ENCODE measurements at regions of chr22 and their contacts with region 1.

Region 1: DNA sequence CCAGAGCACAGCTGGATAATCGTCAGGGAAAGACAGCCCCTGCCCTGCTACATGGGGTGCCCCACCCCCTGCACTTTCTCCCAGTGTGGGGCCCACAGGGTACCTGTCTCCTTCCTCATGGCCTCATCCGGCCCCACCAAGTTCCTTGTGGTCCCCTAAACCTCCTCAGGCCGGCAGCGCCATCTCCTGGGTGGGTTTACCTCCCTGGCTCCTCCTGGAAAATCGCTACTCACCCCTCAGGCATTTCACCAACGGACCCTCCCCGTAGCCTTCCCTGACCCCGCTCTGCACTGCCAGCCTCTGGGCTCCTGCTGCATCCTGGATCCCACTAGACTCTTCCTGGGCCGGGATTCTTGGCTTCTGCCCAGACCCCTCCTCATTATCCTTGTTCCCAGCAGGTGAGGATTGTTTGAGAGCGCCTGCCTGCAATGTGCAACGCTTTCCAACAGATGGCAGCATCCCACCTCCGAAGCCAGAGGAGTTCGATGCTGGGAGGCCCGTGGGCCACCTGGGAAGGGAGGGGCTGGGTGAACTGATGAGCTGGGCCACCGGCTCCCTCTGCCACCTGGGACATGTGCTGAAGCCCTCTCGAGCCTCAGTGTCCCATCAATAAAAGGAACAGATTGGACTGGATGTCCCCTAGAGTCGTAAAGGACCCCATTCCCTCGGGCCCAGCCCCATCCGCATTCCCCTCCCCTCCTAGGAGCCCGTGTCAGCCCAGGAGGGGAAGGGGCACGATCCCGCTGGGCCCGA is 44.2 kb upstream of the TTLL12 start:
- DNase-seq: peak; percentile 89
- ATAC-seq: peak; percentile 54
- H3K4me3 Mint-ChIP-seq: peak overlapping the region; percentile 45
- H3K27ac Mint-ChIP-seq: peak overlapping the region; percentile 79
- H3K4me1 Mint-ChIP-seq: peaks cover 19% of the 10 kb centered on the region
- H3K27me3 Mint-ChIP-seq: no peaks in the 10 kb centered on the region; the same call in 1 of the 2 replicates
- CTCF ChIP-seq: peak; percentile 97

Region 2: DNA sequence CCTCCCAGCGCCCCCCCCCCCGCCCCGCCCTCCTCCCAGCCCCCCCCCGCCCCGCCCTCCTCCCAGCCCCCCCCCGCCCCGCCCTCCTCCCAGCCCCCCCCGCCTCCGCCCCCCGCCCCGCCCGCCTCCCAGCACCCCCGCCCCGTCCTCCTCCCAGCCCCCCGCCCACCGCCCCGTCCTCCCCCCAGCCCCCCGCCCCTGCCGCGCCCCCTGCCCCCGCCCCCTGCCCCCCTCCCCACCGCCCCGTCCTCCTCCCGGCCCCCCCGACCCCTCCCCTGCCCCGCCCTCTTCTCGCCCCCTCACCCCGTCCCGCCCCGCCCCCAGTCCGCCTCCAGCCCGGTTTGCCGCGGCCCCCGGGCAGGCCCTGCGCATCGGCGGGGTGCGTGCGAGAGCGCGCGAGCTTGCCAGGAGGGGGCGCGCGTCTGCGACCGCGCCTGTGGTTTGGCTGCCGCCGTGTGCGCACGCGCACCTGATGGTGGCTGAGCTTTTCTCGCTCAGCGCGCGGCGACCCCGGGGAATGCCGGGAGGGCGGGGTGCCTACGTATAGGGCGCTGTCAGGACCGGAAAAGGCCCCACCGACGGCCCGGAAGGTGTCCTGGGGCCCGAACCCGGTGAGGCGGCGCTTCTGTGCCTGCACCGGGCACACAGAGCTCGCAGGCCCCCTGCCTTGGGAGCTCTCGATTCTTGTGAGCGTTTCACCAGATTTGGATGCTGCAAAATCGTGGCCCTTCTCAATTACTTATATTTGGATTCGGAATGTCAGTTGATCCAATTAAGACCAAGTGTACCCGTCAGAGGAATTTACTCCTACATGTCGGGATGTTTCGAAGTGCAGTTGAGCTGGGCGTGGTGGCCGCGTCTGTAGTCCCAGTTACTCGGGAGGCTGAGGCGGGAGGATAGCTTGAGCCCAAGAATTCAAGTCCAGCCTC is 43.7 kb before region 1 on chr22:
- CTCF ChIA-PET with region 1: interaction called, 85 read pairs
- POLR2A ChIA-PET with region 1: no interaction called
- DNase-seq: peak; percentile 95
- ATAC-seq: peak; percentile 86
- H3K4me3 Mint-ChIP-seq: peak overlapping the region; percentile 65
- H3K27ac Mint-ChIP-seq: peak overlapping the region; percentile 74
- H3K4me1 Mint-ChIP-seq: peaks cover 24% of the 10 kb centered on the region
- H3K27me3 Mint-ChIP-seq: peaks cover 22% of the 10 kb centered on the region
- CTCF ChIP-seq: peak; percentile 69

Region 3: DNA sequence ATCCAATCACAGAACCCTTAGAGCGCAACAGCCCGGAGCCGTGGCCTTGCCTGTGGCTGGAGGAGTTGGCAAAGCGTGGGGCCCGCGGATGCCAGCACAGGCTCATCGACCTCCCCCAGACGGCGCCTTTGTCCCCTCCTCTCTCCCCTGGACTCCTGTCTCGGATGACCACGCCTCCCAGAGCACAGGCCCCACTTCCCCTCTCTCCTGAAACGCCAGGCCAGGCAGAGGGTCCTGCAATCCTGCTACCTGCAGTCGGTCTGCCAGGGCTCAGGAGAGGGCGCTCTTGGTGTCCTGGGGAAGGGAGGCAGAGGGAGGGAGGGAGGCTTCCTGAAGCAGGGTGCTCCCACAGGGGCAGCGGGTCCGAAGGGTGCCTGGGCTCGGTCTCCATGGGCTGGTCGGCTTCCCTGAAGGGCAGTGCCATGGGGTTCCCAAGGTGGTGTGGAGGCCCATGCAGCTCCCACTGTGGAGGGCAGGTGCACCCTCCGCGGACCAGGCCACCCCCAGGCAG is 27.6 kb before region 1 on chr22:
- CTCF ChIA-PET with region 1: interaction called, 35 read pairs
- POLR2A ChIA-PET with region 1: no interaction called
- DNase-seq: peak; percentile 81
- ATAC-seq: peak; percentile 94
- H3K4me3 Mint-ChIP-seq: no peak overlapping the region
- H3K27ac Mint-ChIP-seq: no peak overlapping the region; the same call in 1 of the 2 replicates
- H3K4me1 Mint-ChIP-seq: peaks cover 9% of the 10 kb centered on the region
- H3K27me3 Mint-ChIP-seq: no peaks in the 10 kb centered on the region
- CTCF ChIP-seq: no peak

Region 4: DNA sequence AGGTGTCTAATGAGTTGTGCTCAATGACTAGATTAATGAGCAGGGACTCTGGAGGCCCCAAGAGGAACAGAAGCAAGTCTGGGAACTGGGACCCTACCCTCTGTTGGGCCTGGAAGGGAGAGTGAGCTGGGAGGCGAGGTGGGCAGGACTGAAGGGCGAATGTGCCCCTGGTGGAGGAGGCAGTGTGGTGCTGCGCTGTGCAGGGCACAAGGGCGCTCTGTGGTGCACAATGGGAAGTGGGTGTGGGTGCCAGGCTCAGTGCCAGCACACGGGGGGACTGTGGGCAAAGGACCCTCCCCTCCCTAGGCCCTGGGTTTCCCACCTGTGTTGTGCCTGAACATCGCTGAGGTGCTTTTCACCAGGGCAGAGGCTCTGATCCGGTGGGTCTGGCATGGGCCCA is 13.3 kb after region 1 on chr22:
- CTCF ChIA-PET with region 1: interaction called, 31 read pairs
- POLR2A ChIA-PET with region 1: no interaction called
- DNase-seq: no peak
- ATAC-seq: no peak
- H3K4me3 Mint-ChIP-seq: no peak overlapping the region
- H3K27ac Mint-ChIP-seq: no peak overlapping the region
- H3K4me1 Mint-ChIP-seq: 0 out of 2 replicates have a peak, but pooled peaks cover 2% of the 10 kb centered on the region
- H3K27me3 Mint-ChIP-seq: no peaks in the 10 kb centered on the region
- CTCF ChIP-seq: no peak

Region 5: GRCh38 chr22:43287441-43287840 is 56.3 kb after region 1 on chr22:
- CTCF ChIA-PET with region 1: interaction called, 15 read pairs
- POLR2A ChIA-PET with region 1: no interaction called
- DNase-seq: no peak
- ATAC-seq: no peak
- H3K4me3 Mint-ChIP-seq: no peak overlapping the region
- H3K27ac Mint-ChIP-seq: no peak overlapping the region
- H3K4me1 Mint-ChIP-seq: no peaks in the 10 kb centered on the region
- H3K27me3 Mint-ChIP-seq: no peaks in the 10 kb centered on the region
- CTCF ChIP-seq: no peak

Region 6: DNA sequence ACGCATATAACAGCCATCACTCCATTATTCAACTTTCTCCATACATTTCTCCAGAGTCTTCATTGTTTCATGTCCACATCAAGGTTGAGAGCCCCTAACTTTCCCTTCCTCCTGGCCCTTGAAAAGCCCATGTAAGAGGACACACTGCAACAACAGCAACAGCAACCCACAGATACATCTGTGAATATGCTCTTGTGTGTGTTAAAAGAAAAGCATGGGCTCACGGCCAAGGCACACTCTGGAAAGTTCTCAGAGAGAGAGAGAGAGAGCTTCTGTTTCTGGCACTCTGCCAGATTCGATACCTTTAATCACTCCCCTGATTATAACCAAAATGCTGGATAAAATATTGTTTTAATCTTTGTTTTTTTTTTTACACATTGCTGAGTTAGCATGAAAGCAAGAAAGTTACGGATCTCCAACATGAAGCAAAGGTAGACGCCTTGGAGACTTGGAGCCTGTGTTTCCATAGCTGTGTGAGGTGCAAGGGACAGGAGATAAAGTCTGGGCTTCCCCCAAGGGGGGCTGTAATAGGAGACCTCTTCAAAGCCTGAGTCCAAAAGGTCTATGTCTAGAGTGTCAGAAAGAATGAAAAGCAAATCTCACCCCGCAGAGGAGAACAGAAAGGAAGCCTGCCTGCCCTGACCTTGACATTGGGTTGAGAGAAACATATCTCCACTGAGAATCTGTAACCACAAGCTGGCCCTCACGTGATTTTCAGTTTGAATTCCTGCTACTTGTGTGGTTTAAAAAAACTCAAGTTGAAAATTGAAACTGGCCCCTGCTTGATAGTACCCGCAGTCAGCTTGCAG is 147.0 kb after region 1 on chr22:
- CTCF ChIA-PET with region 1: interaction called, 79 read pairs
- POLR2A ChIA-PET with region 1: interaction called, 3 read pairs
- DNase-seq: no peak
- ATAC-seq: no peak
- H3K4me3 Mint-ChIP-seq: no peak overlapping the region
- H3K27ac Mint-ChIP-seq: no peak overlapping the region
- H3K4me1 Mint-ChIP-seq: no peaks in the 10 kb centered on the region
- H3K27me3 Mint-ChIP-seq: peaks cover 9% of the 10 kb centered on the region; the same call in 1 of the 2 replicates
- CTCF ChIP-seq: no peak

Measured in WTC11 (cell line).